Esophagus squamous epithelium (tissue), 5 donors: ENCODE measurements at regions of chr13 and their contacts with region 1.

Region 1: GRCh38 chr13:106536244-106537034 is 977 bp upstream of the EFNB2 start:
- DNase-seq: peak; percentile 28
- H3K4me3 ChIP-seq: peak overlapping the region; percentile 77 to 93 (median 84)
- H3K27ac ChIP-seq: peak overlapping the region; percentile 65 to 92 (median 85)
- H3K4me1 ChIP-seq: peaks cover 6 to 47% (median 10%) of the 10 kb centered on the region in 3 donors
- H3K27me3 ChIP-seq: no peaks in the 10 kb centered on the region
- CTCF ChIP-seq: peak; percentile 89 to 97 (median 93)
- POLR2A ChIP-seq: no peak

Region 2: DNA sequence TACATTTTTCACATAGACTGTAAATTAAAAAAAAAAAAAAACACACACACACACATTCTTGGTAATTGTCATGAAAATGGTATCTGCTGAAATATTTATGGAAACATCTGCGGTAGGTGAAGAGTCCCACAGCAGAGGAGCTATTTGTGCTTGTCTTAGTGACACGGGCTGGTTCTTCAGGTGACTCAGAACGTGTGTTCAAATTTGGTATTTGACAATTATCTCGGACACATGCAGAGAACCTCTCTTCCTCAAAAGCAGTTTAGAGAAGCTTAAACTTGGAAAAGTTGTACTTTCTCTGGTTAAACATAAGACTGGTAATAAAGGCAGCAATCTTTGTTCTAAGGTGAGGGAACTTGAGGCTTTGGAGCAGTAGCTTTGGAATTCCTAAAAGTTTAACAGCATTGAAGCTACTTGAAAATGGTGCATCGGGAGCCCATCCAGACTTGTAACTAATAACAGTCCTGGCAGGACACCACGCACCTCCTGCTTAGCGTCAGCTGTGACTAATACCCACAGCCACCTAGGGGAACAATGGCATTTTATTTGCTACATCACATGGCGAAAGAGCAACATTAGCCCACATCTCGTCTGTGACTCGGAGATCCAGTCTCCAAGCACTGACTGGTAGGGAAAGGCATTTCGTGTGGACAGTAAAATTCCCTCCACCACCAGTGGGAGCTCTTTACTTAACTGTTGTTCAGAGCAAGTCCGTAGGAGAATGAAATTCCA is 1965.1 kb before region 1 on chr13:
- intact Hi-C with region 1: loop called (anchors 10 kb)
- DNase-seq: no peak
- H3K4me3 ChIP-seq: peak overlapping the region in 1 of 4 donors; percentile 10
- H3K27ac ChIP-seq: no peak overlapping the region
- H3K4me1 ChIP-seq: peaks cover 0 to 6% (median 0%) of the 10 kb centered on the region in 3 donors
- H3K27me3 ChIP-seq: no peaks in the 10 kb centered on the region
- CTCF ChIP-seq: peak in 5 of 6 experiments; percentile 43 to 61 (median 50)
- POLR2A ChIP-seq: no peak

Region 3: GRCh38 chr13:106096661-106097092 is 439.8 kb before region 1 on chr13:
- intact Hi-C with region 1: loop called (anchors 10 kb)
- DNase-seq: no peak
- H3K4me3 ChIP-seq: no peak overlapping the region
- H3K27ac ChIP-seq: peak overlapping the region in 1 of 4 donors; percentile 16
- H3K4me1 ChIP-seq: peaks cover 0 to 12% (median 0%) of the 10 kb centered on the region in 3 donors
- H3K27me3 ChIP-seq: no peaks in the 10 kb centered on the region
- CTCF ChIP-seq: no peak
- POLR2A ChIP-seq: no peak

Region 4: GRCh38 chr13:106151056-106151699 is 385.3 kb before region 1 on chr13:
- intact Hi-C with region 1: no loop called
- DNase-seq: no peak
- H3K4me3 ChIP-seq: no peak overlapping the region
- H3K27ac ChIP-seq: peak overlapping the region; percentile 40 to 65 (median 57)
- H3K4me1 ChIP-seq: peaks cover 0 to 37% (median 0%) of the 10 kb centered on the region in 3 donors
- H3K27me3 ChIP-seq: no peaks in the 10 kb centered on the region
- CTCF ChIP-seq: no peak
- POLR2A ChIP-seq: no peak

Region 5: GRCh38 chr13:106205871-106206270 is 330.6 kb before region 1 on chr13:
- intact Hi-C with region 1: no loop called
- DNase-seq: no peak
- H3K4me3 ChIP-seq: no peak overlapping the region
- H3K27ac ChIP-seq: no peak overlapping the region
- H3K4me1 ChIP-seq: no peaks in the 10 kb centered on the region
- H3K27me3 ChIP-seq: no peaks in the 10 kb centered on the region
- CTCF ChIP-seq: no peak
- POLR2A ChIP-seq: no peak